WTC11 (cell line): ENCODE measurements at regions of chr2 and their contacts with region 1.

Region 1: DNA sequence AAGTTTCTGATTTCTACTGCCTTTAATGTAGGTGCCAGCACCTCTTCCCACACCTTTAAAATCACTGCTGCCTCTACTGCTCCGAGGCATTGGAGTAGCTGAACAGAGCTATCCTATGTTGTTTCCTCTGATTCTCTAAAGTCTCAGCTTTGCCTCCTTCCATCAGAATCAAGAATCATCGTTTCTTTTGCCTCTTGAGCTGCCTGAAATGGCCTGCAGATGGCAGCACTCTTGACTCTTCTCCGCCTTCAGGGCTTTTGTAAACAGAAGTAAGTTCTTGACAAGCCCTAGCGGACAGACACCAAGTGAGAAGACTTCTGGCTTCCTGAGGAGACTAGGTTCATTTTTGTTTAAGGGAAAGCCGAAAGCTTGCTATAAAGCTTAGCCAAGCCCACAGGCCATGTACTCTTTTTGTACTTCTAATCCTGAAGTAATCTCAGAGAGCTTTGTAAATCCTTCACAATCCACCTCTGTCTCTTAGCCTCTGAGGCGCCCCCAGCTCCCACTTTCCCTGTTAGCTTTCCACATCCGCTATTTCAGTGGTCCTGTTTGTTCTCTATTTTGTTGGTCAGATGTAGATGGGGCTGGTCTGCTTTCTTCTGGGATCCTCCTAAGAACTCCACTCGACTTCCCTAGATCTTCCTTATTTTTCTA is 48.4 kb downstream of the GTF3C3 start:
- DNase-seq: peak; percentile 83
- ATAC-seq: peak; percentile 98
- H3K4me3 Mint-ChIP-seq: no peak overlapping the region
- H3K27ac Mint-ChIP-seq: peak overlapping the region; percentile 77; the same call in 1 of the 2 replicates
- H3K4me1 Mint-ChIP-seq: peaks cover 4% of the 10 kb centered on the region; the same call in 1 of the 2 replicates
- H3K27me3 Mint-ChIP-seq: no peaks in the 10 kb centered on the region; the same call in 1 of the 2 replicates
- CTCF ChIP-seq: peak; percentile 49

Region 2: GRCh38 chr2:196420143-196420542 is 331.0 kb before region 1 on chr2:
- CTCF ChIA-PET with region 1: no interaction called
- POLR2A ChIA-PET with region 1: no interaction called
- DNase-seq: no peak
- ATAC-seq: no peak
- H3K4me3 Mint-ChIP-seq: no peak overlapping the region
- H3K27ac Mint-ChIP-seq: no peak overlapping the region
- H3K4me1 Mint-ChIP-seq: 0 out of 2 replicates have a peak, but pooled peaks cover 3% of the 10 kb centered on the region
- H3K27me3 Mint-ChIP-seq: no peaks in the 10 kb centered on the region
- CTCF ChIP-seq: no peak

Region 3: GRCh38 chr2:196679368-196679767 is 71.7 kb before region 1 on chr2:
- CTCF ChIA-PET with region 1: no interaction called
- POLR2A ChIA-PET with region 1: no interaction called
- DNase-seq: no peak
- ATAC-seq: no peak
- H3K4me3 Mint-ChIP-seq: no peak overlapping the region
- H3K27ac Mint-ChIP-seq: no peak overlapping the region
- H3K4me1 Mint-ChIP-seq: no peaks in the 10 kb centered on the region
- H3K27me3 Mint-ChIP-seq: no peaks in the 10 kb centered on the region
- CTCF ChIP-seq: no peak

Region 4: GRCh38 chr2:196737046-196737445 is 14.1 kb before region 1 on chr2:
- CTCF ChIA-PET with region 1: interaction called, 20 read pairs
- POLR2A ChIA-PET with region 1: no interaction called
- DNase-seq: no peak
- ATAC-seq: no peak
- H3K4me3 Mint-ChIP-seq: no peak overlapping the region
- H3K27ac Mint-ChIP-seq: no peak overlapping the region
- H3K4me1 Mint-ChIP-seq: no peaks in the 10 kb centered on the region
- H3K27me3 Mint-ChIP-seq: no peaks in the 10 kb centered on the region
- CTCF ChIP-seq: no peak

Region 5: GRCh38 chr2:196767101-196767500 is 16.0 kb after region 1 on chr2:
- CTCF ChIA-PET with region 1: interaction called, 12 read pairs
- POLR2A ChIA-PET with region 1: interaction called, 3 read pairs
- DNase-seq: no peak
- ATAC-seq: no peak
- H3K4me3 Mint-ChIP-seq: no peak overlapping the region
- H3K27ac Mint-ChIP-seq: no peak overlapping the region
- H3K4me1 Mint-ChIP-seq: no peaks in the 10 kb centered on the region
- H3K27me3 Mint-ChIP-seq: no peaks in the 10 kb centered on the region
- CTCF ChIP-seq: no peak